A549 (cell line): ENCODE measurements at regions of chr18 and their contacts with region 1.

Region 1: GRCh38 chr18:9661564-9661963 is 46.5 kb upstream of the RAB31 start:
- DNase-seq: peak in 1 of 2 experiments; percentile 50
- ATAC-seq: peak; percentile 71 to 79; a peak in 4 of 6 replicates
- H3K4me3 ChIP-seq: no peak overlapping the region
- H3K27ac ChIP-seq: no peak overlapping the region
- H3K4me1 ChIP-seq: no peaks in the 10 kb centered on the region
- CTCF ChIP-seq: peak; percentile 28; the same call in 1 of the 3 replicates
- EP300 ChIP-seq: no peak
- POLR2A ChIP-seq: no peak
- RAD21 ChIP-seq: peak; percentile 51 to 63

Region 2: DNA sequence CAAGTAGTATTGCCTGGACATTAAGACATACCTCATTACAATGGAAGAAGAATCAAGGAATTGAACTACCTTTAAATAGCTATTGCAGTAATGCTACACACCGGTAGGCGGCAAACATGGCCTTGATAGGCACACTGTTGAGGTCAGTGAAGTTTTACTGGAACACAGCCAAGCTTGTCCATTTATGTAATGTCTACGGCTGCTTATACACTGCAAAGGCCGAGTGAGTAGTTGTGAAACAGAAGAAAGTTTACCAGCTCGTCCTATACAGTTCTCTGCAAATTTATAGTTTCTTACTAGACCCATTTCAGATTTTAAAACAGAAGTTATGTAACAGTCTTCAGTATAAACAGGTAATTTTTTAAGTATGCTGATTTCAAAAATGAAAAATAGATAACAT is 86.0 kb before region 1 on chr18:
- CTCF ChIA-PET with region 1: interaction called, 11 read pairs
- POLR2A ChIA-PET with region 1: no interaction called
- DNase-seq: peak; percentile 44 to 95
- ATAC-seq: peak; percentile 97
- H3K4me3 ChIP-seq: no peak overlapping the region
- H3K27ac ChIP-seq: peak overlapping the region; percentile 12 to 64; a peak in 3 of 6 replicates
- H3K4me1 ChIP-seq: peaks cover 28% of the 10 kb centered on the region
- CTCF ChIP-seq: peak; percentile 64
- EP300 ChIP-seq: no peak
- POLR2A ChIP-seq: no peak
- RAD21 ChIP-seq: peak; percentile 82 to 90

Region 3: GRCh38 chr18:9608298-9608697 is 53.3 kb before region 1 on chr18:
- CTCF ChIA-PET with region 1: interaction called, 15 read pairs
- POLR2A ChIA-PET with region 1: interaction called, 3 read pairs
- DNase-seq: peak in 1 of 2 experiments; percentile 15
- ATAC-seq: no peak
- H3K4me3 ChIP-seq: no peak overlapping the region
- H3K27ac ChIP-seq: peak overlapping the region; percentile 39 to 79; a peak in 4 of 6 replicates
- H3K4me1 ChIP-seq: peaks cover 43% of the 10 kb centered on the region
- CTCF ChIP-seq: no peak
- EP300 ChIP-seq: no peak
- POLR2A ChIP-seq: no peak
- RAD21 ChIP-seq: no peak

Region 4: DNA sequence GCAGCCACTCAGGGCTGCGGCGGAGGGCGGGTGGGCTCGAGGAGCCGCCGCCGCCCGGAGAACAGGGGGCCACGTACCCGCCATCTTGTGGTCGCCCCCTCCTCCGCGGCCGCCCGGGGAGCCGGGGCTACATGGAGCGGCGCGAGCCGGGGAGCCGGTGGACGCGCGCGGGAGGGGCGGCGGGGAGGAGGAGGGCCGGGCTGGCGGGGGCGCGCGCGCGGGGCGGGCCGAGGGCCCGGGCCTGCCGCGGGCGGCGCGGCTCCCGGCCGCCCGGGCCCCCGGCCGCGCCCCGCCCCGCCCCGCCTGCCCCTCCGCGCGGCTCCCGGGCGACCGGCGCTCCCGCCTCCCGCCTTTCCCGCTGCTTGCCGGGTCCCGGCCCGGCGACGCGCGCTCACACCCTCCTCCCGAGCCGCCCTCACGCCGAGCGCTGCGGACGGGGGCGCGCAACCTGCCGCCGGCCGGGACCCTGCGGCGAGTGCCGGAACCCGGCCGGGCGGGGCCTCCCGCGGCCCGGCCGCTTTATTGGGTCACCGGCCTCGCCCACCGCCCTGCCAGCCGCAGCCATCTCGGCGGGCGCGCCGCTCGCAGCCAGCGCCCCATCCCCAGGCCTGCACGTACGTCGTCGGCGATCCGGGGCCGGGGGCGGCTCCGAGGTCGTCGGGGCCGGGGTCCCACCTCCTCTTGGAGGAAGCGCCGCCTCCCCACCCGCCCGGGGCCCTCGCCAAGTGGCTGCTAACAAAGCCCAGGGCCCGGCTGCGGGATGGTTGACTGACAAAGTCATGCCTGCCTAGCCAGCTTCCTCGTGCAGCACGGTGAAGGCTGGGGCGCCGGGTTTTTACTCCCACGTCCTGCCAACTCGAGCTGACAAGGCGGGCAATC is 46.9 kb before region 1 on chr18 and contains the start of gene PPP4R1:
- CTCF ChIA-PET with region 1: interaction called, 15 read pairs
- POLR2A ChIA-PET with region 1: interaction called, 3 read pairs
- DNase-seq: peak; percentile 40 to 67
- ATAC-seq: peak; percentile 56 to 69
- H3K4me3 ChIP-seq: peak within 1 kb of the TSS; percentile 98
- H3K27ac ChIP-seq: peak within 1 kb of the TSS; percentile 100
- H3K4me1 ChIP-seq: peaks cover 47% of the 10 kb centered on the region
- CTCF ChIP-seq: no peak
- EP300 ChIP-seq: no peak
- POLR2A ChIP-seq: peak; percentile 34
- RAD21 ChIP-seq: no peak
- polyA plus RNA-seq, gene PPP4R1: 94.5 and 97.3 TPM in 2 replicates

Region 5: DNA sequence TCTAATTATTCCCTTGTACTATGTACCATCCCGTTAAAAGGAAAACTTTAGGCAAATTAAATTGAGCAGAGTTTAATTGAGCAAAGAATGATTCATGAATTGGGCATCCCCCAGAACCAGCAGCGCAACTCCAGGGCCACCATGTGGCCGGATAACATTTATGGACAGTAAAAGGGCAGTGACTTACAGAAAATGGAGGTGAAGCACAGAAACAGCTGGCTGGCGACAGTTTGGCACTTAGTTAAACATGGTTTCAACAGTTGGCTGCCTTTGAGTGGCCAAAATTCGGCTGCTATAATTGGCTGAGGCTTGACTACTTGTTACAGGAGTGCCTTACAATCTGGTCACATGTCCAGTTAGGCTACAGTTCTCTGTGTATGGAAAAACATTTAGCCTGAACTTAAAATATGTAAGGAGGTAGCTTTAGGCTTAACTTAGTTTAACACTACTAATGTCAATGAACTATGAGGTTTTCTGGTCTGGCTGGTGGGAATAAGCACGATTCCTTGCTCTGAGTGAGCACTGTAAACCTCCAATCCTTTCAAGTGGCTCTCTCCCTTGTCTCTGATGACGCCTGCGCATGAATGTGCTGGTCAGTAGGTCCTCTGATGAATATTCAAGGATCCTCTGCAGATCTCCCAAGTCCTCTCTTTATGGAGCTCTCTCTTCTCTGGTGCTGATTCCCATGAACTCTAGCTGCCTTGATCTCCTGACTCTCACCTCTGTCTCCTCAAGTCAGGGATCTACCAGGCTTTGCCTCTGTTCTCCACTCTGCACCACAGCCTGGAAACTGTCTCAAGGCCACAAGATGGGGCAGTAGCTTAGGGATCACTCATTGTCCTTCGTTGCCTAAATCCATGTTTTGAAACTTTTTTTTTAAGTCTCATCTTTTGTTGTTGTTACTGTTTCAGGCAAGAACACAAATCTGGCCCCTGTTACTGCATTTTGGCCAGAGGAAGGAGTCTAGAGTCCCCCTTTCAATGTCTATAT is 22.1 kb after region 1 on chr18:
- CTCF ChIA-PET with region 1: no interaction called
- POLR2A ChIA-PET with region 1: no interaction called
- DNase-seq: peak in 1 of 2 experiments; percentile 83
- ATAC-seq: peak; percentile 92 to 97
- H3K4me3 ChIP-seq: no peak overlapping the region
- H3K27ac ChIP-seq: peak overlapping the region; percentile 67 to 76
- H3K4me1 ChIP-seq: peaks cover 24% of the 10 kb centered on the region
- CTCF ChIP-seq: peak; percentile 59
- EP300 ChIP-seq: no peak
- POLR2A ChIP-seq: no peak
- RAD21 ChIP-seq: peak; percentile 76 to 86

Region 6: DNA sequence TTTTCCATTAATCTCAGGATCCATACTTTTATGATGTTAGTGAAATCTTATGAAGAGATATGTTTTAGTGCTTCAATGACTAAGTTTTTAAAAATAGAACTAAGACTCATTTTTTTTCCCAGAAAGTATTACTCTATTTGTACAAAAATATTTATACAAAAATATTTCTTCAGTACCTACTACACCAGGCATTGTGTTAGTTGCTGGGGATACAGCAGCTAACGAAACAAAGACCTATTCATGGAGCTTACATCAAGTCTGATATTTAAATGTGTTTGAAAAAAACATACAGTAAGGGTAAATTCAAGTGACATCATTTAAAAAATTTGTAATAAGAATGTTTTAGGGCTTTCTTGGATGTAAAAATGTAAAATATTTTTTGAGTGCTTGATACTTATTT is 263.8 kb after region 1 on chr18:
- CTCF ChIA-PET with region 1: no interaction called
- POLR2A ChIA-PET with region 1: no interaction called
- DNase-seq: no peak
- ATAC-seq: no peak
- H3K4me3 ChIP-seq: no peak overlapping the region
- H3K27ac ChIP-seq: no peak overlapping the region
- H3K4me1 ChIP-seq: peaks cover 76% of the 10 kb centered on the region
- CTCF ChIP-seq: no peak
- EP300 ChIP-seq: no peak
- POLR2A ChIP-seq: no peak
- RAD21 ChIP-seq: no peak